HepG2 (cell line): ENCODE measurements at regions of chr15 and their contacts with region 1.

Region 1: GRCh38 chr15:61834076-61834697 is 226.1 kb downstream of the VPS13C start:
- DNase-seq: peak; percentile 34
- ATAC-seq: peak; percentile 76
- H3K4me3 ChIP-seq: no peak overlapping the region
- H3K27ac ChIP-seq: no peak overlapping the region
- H3K4me1 ChIP-seq: 0 out of 2 replicates have a peak, but pooled peaks cover 12% of the 10 kb centered on the region
- H3K27me3 ChIP-seq: peaks cover 6 to 33% of the 10 kb centered on the region in 2 experiments; a peak in 2 of 5 replicates
- CTCF ChIP-seq: peak; percentile 85
- EP300 ChIP-seq: no peak
- POLR2A ChIP-seq: no peak
- RAD21 ChIP-seq: 0 out of 2 replicates have a peak, but pooled peaks have one; percentile 41

Region 2: DNA sequence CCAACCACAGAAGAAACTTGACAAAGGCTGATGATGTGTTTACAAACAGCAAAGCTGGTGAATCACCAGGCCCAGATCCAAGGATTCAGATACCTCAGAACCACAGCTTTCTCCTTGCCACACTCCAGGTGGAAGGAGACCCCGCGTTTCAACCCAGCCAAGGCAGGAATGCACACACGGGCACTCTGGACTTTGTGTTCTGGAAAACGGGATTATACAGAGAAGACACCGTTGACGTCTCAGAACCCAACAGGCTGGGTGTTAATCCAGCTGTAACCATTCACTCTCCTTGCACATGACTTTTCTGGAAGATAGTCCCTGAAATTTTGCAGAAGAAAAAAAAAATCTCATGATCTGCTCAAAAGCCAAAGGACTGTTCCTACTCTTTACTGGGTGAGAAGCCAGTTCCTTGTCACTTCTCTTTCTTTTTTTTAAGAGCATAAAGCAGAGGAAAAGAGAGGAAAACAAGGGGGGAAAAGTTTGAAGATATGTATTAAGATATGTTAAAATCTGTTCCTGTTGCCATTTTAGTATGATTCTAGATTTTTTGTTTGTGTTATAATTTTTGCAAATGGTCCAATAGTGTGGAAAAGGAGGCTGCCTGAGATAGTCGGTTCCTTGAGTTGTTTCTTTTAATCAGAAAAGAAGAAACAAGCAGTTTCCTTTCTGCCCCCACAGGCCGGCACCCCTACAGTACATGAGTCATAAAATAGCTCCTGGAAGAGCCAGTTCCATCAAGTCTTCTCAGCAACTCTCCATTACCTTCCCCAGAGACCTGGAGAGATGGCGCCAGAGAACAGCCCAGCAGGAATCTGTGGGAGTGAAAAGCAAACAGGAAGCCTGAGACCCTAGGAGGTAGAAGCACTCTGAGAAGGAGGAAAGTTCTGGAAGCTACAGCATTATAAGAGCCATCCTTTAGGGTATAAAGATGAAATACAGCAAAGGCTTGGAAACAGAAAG is 678.2 kb before region 1 on chr15:
- CTCF ChIA-PET with region 1: no interaction called
- POLR2A ChIA-PET with region 1: no interaction called
- in situ Hi-C with region 1: loop called (anchors 25 kb)
- intact Hi-C with region 1: no loop called
- DNase-seq: no peak
- ATAC-seq: no peak
- H3K4me3 ChIP-seq: no peak overlapping the region
- H3K27ac ChIP-seq: no peak overlapping the region
- H3K4me1 ChIP-seq: no peaks in the 10 kb centered on the region
- H3K27me3 ChIP-seq: peaks cover 0 to 8% of the 10 kb centered on the region in 2 experiments; a peak in 1 of 5 replicates
- CTCF ChIP-seq: no peak
- EP300 ChIP-seq: no peak
- POLR2A ChIP-seq: no peak
- RAD21 ChIP-seq: no peak

Region 3: GRCh38 chr15:61169904-61170695 is 664.1 kb before region 1 on chr15:
- CTCF ChIA-PET with region 1: interaction called, 9 read pairs
- POLR2A ChIA-PET with region 1: no interaction called
- in situ Hi-C with region 1: loop called (anchors 25 kb)
- intact Hi-C with region 1: loop called (anchors 1 kb)
- DNase-seq: no peak
- ATAC-seq: no peak
- H3K4me3 ChIP-seq: no peak overlapping the region
- H3K27ac ChIP-seq: no peak overlapping the region
- H3K4me1 ChIP-seq: no peaks in the 10 kb centered on the region
- H3K27me3 ChIP-seq: peaks cover 0 to under 1% of the 10 kb centered on the region in 2 experiments; a peak in 1 of 5 replicates
- CTCF ChIP-seq: no peak
- EP300 ChIP-seq: no peak
- POLR2A ChIP-seq: no peak
- RAD21 ChIP-seq: no peak